Heart left ventricle (tissue), 16 donors: ENCODE measurements at regions of chr11 and their contacts with region 1.

Region 1: GRCh38 chr11:97739932-97740800 is 1280.6 kb upstream of the CNTN5 start:
- DNase-seq: no peak
- ATAC-seq: peak; percentile 71 to 90 (median 84)
- H3K4me3 ChIP-seq: no peak overlapping the region
- H3K27ac ChIP-seq: peak overlapping the region; percentile 15 to 81 (median 63)
- H3K4me1 ChIP-seq: peaks cover 0 to 22% (median 2%) of the 10 kb centered on the region in 12 donors
- H3K27me3 ChIP-seq: no peaks in the 10 kb centered on the region
- CTCF ChIP-seq: no peak
- POLR2A ChIP-seq: no peak

Region 2: GRCh38 chr11:97622795-97623194 is 117.4 kb before region 1 on chr11:
- intact Hi-C with region 1: loop called in 1 of 10 experiments (anchors 10 kb)
- DNase-seq: no peak
- ATAC-seq: no peak
- H3K4me3 ChIP-seq: no peak overlapping the region
- H3K27ac ChIP-seq: no peak overlapping the region
- H3K4me1 ChIP-seq: no peaks in the 10 kb centered on the region
- H3K27me3 ChIP-seq: no peaks in the 10 kb centered on the region
- CTCF ChIP-seq: no peak
- POLR2A ChIP-seq: no peak